ENCODE measurements at regions of chr12 and their contacts with region 1.

Region 1: GRCh38 chr12:132523576-132524331 is 33.8 kb downstream of the FBRSL1 start:
- DNase-seq: peak; percentile 28
- H3K4me3 ChIP-seq: no peak overlapping the region
- H3K27ac ChIP-seq: no peak overlapping the region
- H3K4me1 ChIP-seq: no peaks in the 10 kb centered on the region
- H3K27me3 ChIP-seq: no peaks in the 10 kb centered on the region
- CTCF ChIP-seq: peak; percentile 81 to 90
- POLR2A ChIP-seq: no peak

Region 2: DNA sequence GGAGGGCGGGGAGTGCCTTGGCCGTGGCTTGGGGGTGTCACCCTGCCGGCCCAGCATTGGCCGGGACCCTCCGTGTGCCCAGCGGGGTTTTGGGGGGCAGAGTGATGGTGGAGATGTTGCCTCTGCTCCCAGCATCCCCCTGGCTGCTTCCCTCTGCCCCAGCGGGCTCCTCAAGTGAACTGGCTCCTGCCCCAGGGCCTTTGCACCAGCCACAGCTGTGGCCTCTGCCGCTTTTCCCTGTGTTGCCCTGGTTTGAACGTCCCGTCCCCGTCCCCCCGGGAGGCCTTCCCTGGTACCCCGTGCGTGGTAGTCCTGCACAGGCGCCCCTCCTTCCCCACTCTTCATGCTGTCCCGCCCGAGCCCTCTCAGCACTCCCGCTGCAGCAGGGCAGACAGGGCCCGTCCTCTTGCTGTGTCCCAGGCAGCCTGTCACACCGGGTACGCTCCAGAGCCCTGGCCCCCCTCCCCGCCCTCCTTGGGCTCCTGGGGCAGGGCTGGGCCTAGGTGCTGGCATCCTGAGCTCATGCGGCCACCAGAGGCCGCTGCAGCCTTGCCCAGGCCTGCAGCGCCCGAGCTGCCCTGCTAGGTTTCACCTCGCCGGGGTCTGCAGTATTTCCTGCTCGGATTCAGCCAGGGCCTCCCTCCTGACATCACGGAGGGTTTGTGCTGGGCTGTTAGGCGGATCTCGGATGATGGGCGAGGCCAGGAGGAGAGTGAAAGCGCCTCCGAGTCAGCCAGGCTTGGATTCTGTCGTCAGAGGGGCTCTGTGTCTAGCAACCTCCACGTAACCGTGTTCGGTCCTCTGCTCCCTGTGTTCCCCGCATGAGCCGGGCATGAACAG is 370.0 kb before region 1 on chr12:
- CTCF ChIA-PET with region 1: interaction called, 15 read pairs
- POLR2A ChIA-PET with region 1: no interaction called
- dilution Hi-C with region 1: no loop called
- intact Hi-C with region 1: loop called (anchors 1 kb)
- DNase-seq: peak; percentile 53
- H3K4me3 ChIP-seq: no peak overlapping the region
- H3K27ac ChIP-seq: no peak overlapping the region
- H3K4me1 ChIP-seq: no peaks in the 10 kb centered on the region
- H3K27me3 ChIP-seq: no peaks in the 10 kb centered on the region
- CTCF ChIP-seq: peak; percentile 89 to 98
- POLR2A ChIP-seq: no peak

Region 3: GRCh38 chr12:132460571-132460970 is 63.2 kb before region 1 on chr12:
- CTCF ChIA-PET with region 1: interaction called, 8 read pairs
- POLR2A ChIA-PET with region 1: no interaction called
- dilution Hi-C with region 1: no loop called
- intact Hi-C with region 1: loop called (anchors 10 kb)
- DNase-seq: no peak
- H3K4me3 ChIP-seq: no peak overlapping the region
- H3K27ac ChIP-seq: no peak overlapping the region
- H3K4me1 ChIP-seq: no peaks in the 10 kb centered on the region
- H3K27me3 ChIP-seq: no peaks in the 10 kb centered on the region
- CTCF ChIP-seq: peak; percentile 21 to 35
- POLR2A ChIP-seq: no peak

Region 4: GRCh38 chr12:132489602-132490239 is 34.0 kb before region 1 on chr12 and contains the start of gene FBRSL1:
- CTCF ChIA-PET with region 1: interaction called, 10 read pairs
- POLR2A ChIA-PET with region 1: no interaction called
- dilution Hi-C with region 1: no loop called
- intact Hi-C with region 1: no loop called
- DNase-seq: peak; percentile 76
- H3K4me3 ChIP-seq: peak within 1 kb of the TSS; percentile 58 to 69 (median 67)
- H3K27ac ChIP-seq: no peak within 1 kb of the TSS
- H3K4me1 ChIP-seq: peaks cover 15% of the 10 kb centered on the region
- H3K27me3 ChIP-seq: no peaks in the 10 kb centered on the region
- CTCF ChIP-seq: no peak
- POLR2A ChIP-seq: no peak
- total RNA-seq, gene FBRSL1: 75.5 and 79.8 TPM in 2 replicates

Region 5: DNA sequence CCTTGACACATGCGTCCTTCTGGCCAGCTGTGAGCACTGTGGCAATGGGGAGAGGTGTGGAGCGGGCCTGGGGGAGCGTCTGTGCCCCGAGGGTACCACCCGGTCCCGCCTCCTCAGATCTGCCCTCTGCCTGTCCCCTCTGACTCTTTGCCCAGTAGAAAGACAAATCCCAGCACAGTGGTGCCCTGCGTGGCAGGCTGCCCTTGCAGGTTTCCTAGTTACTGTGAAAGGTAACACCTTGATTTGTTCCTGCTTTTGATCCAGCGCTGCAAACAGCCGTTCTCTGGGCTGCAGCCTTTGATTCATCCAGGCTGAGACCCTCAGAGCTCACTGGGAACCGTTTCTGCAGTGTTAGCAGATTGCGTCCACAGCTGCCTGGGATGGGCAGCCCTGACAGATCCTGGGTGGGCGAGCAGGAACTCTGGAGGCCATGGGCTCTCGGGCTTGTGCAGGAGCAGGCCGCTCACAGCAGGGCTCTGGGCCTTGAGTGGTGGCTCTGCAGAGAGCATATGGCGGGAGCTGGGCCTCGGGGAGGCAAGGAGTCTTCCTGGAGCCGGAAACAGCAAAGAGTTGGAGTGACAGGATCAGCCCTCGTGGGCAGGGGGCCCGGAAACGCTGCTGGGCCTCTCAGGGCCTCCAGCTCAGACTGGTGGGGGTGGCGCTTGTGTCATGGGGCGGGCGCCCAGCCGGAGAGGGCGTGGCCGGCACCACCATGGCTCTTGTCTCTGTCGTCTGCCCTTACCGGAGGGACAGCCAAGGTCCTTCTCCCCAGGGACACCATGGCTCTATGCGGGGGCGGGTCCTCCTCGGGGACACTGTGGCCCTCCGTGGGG is 17.2 kb before region 1 on chr12:
- CTCF ChIA-PET with region 1: interaction called, 10 read pairs
- POLR2A ChIA-PET with region 1: no interaction called
- dilution Hi-C with region 1: no loop called
- intact Hi-C with region 1: no loop called
- DNase-seq: peak; percentile 85
- H3K4me3 ChIP-seq: no peak overlapping the region
- H3K27ac ChIP-seq: peak overlapping the region; percentile 48
- H3K4me1 ChIP-seq: peaks cover 16% of the 10 kb centered on the region
- H3K27me3 ChIP-seq: peaks cover 0 to 10% of the 10 kb centered on the region in 2 experiments
- CTCF ChIP-seq: no peak
- POLR2A ChIP-seq: no peak